Activated T-helper 1 cell treated with anti-CD3 and anti-CD28 coated beads, Interleukin-12 subunit alpha, Interleukin-12 subunit beta, Interleukin-2, Interleukin-4 antibody, amounts not matched to agents 30 ng/mL and 10 ng/mL and 1 ng/mL, durations not matched to agents 14 hours and 24 hours and 36 hours (primary cell): ENCODE measurements at regions of chr15 and their contacts with region 1.

Region 1: DNA sequence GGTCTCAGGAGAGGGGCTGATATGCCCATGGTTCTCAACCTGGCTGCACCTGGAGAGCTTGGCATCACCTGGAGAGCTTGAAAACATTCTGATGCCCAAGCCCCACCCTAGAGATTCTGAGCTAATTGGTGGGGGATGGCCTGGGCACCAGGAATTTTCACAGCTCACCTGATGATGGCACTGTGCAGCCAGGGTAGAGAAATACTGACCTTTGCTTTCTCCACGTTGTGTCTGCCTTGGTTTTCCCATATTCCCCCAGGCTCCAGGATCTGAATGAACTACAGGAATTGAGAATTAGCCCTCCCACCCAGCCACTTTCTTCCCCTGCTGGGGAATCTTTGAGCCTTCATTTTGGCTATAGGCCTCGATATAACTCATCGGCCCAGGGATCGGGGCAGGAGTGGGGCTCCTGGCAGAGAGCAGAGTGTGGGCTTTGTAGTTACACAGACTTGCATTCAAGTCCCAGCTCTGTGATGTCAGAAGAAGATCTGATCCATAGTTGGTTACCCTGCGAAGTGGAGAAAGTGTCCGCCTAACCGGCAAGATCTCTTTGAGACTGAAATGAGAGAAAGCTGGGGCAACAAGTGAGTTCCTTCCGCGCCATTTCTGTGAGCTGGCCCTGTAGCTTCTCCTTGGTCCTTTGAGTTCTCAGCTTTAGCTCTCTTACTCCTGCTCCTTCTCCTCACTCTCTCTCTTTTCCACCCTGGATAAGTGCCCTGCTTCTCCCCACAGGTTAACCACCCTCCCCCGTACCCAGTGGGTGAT is 33.1 kb upstream of the UBE2Q2 start:
- DNase-seq: no peak
- H3K4me3 Mint-ChIP-seq: no peak overlapping the region
- H3K27ac Mint-ChIP-seq: no peak overlapping the region
- H3K4me1 Mint-ChIP-seq: no peaks in the 10 kb centered on the region
- H3K27me3 Mint-ChIP-seq: peaks cover 13% of the 10 kb centered on the region

Region 2: DNA sequence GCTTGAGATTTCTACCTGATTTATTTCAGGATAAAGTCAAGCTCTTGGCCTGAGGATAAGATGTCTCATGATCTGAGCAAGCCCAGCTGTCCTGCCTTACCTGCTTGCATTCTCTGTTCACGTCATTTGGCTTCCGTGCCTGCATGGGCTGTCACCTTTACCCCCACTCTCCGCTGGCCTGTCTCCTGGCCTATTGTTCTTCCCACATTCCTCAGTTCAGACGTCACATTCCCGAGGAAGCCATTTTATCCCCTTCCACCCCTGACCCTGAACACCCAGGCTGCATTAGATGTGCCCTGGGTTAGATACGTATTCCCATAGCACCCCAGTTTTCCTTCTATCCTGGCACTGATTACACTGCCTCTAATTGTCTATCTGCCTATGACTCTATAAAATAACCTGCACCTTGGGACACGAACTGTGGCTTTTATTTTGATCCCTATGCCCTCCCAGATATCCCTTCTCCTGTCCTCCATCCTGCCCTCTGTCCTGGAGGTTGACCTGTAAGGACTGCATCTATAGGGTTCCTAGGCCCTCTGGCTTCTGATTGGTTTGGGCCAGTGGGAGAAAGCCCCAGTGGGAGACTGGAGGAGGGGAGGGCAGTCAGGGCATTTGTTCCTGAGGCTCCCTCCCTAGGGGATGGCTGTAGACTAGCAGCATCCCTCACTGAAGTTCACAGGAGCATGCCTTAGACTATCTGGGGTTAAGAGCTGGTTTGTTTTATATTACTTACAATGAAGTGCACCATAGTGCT is 13.9 kb after region 1 on chr15:
- intact Hi-C with region 1: no loop called
- DNase-seq: no peak
- H3K4me3 Mint-ChIP-seq: no peak overlapping the region
- H3K27ac Mint-ChIP-seq: no peak overlapping the region
- H3K4me1 Mint-ChIP-seq: no peaks in the 10 kb centered on the region
- H3K27me3 Mint-ChIP-seq: peaks cover 10% of the 10 kb centered on the region

Region 3: GRCh38 chr15:76057332-76058000 is 247.3 kb after region 1 on chr15:
- intact Hi-C with region 1: loop called (anchors 10 kb)
- DNase-seq: no peak
- H3K4me3 Mint-ChIP-seq: no peak overlapping the region
- H3K27ac Mint-ChIP-seq: no peak overlapping the region
- H3K4me1 Mint-ChIP-seq: peaks cover 26% of the 10 kb centered on the region
- H3K27me3 Mint-ChIP-seq: peaks cover 52% of the 10 kb centered on the region